ENCODE measurements at regions of chr2 and their contacts with region 1.

Region 1: GRCh38 chr2:189762551-189763298 is at the start of gene OSGEPL1:
- DNase-seq: peak; percentile 93
- H3K4me3 Mint-ChIP-seq: peak within 1 kb of the TSS; percentile 94
- H3K27ac Mint-ChIP-seq: peak within 1 kb of the TSS; percentile 78
- H3K4me1 Mint-ChIP-seq: no peaks in the 10 kb centered on the region
- H3K27me3 Mint-ChIP-seq: no peaks in the 10 kb centered on the region
- CTCF ChIP-seq: peak; percentile 46
- total RNA-seq, gene OSGEPL1: 3.7 and 5.1 TPM in 2 replicates

Region 2: GRCh38 chr2:189674374-189675112 is 88.2 kb before region 1 on chr2 and contains the start of gene ANKAR:
- CTCF ChIA-PET with region 1: interaction called, 3 read pairs
- POLR2A ChIA-PET with region 1: interaction called, 9 read pairs
- intact Hi-C with region 1: loop called (anchors 1 kb)
- DNase-seq: peak; percentile 62
- H3K4me3 Mint-ChIP-seq: peak within 1 kb of the TSS; percentile 86
- H3K27ac Mint-ChIP-seq: peak within 1 kb of the TSS; percentile 95
- H3K4me1 Mint-ChIP-seq: peaks cover 5% of the 10 kb centered on the region
- H3K27me3 Mint-ChIP-seq: no peaks in the 10 kb centered on the region
- CTCF ChIP-seq: peak; percentile 75
- total RNA-seq, gene ANKAR: 4.6 and 5.1 TPM in 2 replicates

Region 3: GRCh38 chr2:189751080-189751658 is 11.6 kb before region 1 on chr2:
- CTCF ChIA-PET with region 1: interaction called, 31 read pairs
- POLR2A ChIA-PET with region 1: interaction called, 13 read pairs
- intact Hi-C with region 1: no loop called
- DNase-seq: peak; percentile 52
- H3K4me3 Mint-ChIP-seq: no peak overlapping the region
- H3K27ac Mint-ChIP-seq: no peak overlapping the region
- H3K4me1 Mint-ChIP-seq: no peaks in the 10 kb centered on the region
- H3K27me3 Mint-ChIP-seq: no peaks in the 10 kb centered on the region
- CTCF ChIP-seq: peak; percentile 61

Region 4: GRCh38 chr2:189783927-189784867 is 21.5 kb after region 1 on chr2 and contains the starts of genes ORMDL1 and PMS1:
- CTCF ChIA-PET with region 1: interaction called, 11 read pairs
- POLR2A ChIA-PET with region 1: interaction called, 86 read pairs
- intact Hi-C with region 1: no loop called
- DNase-seq: peak; percentile 94
- H3K4me3 Mint-ChIP-seq: peak within 1 kb of the TSS; percentile 90
- H3K27ac Mint-ChIP-seq: peak within 1 kb of the TSS; percentile 73
- H3K4me1 Mint-ChIP-seq: peaks cover 41% of the 10 kb centered on the region
- H3K27me3 Mint-ChIP-seq: no peaks in the 10 kb centered on the region
- CTCF ChIP-seq: no peak
- total RNA-seq, gene ORMDL1: 83.0 and 85.1 TPM in 2 replicates
- total RNA-seq, gene PMS1: 38.3 and 50.9 TPM in 2 replicates

Region 5: DNA sequence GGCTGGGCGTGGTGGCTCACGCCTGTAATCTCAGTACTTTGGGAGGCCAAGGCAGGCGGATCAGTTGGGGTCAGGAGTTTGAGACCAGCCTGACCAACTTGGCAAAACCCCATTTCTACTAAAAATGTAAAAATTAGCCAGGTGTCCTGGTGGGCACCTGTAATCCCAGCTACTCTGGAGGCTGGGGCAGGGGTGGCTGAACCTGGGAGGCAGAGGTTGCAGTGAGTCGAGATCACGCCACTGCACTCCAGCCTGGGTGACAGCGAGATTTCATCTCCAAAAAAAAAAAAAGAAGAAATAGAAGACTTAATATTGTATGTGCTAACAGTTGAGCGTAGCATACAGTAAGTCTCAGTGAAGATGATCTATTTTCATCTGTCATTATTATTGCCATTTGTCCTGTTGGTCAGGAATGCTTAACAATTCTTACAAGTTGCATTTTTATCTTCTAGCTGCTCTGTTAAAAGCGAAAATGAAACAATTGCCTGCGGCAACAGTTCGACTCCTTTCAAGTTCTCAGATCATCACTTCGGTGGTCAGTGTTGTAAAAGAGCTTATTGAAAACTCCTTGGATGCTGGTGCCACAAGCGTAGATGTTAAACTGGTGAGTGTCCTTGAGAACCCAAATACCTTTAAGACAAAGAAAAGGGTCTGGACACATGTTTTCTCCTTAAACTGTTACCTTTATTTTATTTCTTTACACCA is 28.8 kb after region 1 on chr2:
- CTCF ChIA-PET with region 1: interaction called, 11 read pairs
- POLR2A ChIA-PET with region 1: interaction called, 11 read pairs
- intact Hi-C with region 1: no loop called
- DNase-seq: peak; percentile 35
- H3K4me3 Mint-ChIP-seq: peak overlapping the region; percentile 60
- H3K27ac Mint-ChIP-seq: peak overlapping the region; percentile 25
- H3K4me1 Mint-ChIP-seq: peaks cover 17% of the 10 kb centered on the region
- H3K27me3 Mint-ChIP-seq: no peaks in the 10 kb centered on the region
- CTCF ChIP-seq: no peak

Region 6: DNA sequence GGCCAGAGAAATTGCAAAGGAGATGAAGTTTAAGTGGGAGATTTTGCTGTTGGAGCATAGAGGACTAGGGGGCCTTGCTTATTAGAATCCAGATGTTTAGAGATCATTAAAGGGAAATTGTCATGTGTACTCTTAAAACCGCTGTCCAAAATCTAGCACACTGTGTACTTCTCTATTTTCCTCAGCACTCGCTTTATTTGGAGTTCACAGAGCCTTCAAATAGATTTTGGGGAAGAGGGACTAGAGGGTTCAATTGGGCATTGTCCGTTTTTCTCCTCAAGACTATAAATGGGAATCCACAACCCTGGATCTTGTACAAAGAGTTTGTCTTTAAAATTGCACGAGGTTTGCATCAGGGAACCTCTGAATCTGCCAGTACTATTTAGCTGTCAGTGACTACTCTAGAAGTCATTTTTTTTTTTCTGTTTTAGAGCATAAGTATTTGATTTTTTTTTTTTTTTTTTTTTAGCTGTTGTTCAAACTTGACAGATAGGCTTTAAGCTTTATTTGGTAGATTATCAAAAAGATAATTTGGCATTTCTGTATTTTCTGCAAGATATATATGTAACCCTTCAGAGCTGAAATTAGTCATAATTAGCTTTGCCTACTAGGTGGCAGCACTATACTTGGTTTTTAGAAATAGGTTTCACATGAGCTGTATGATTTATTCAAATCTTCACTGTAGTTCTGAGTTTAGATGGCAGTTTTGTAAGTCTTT is 35.7 kb after region 1 on chr2:
- CTCF ChIA-PET with region 1: interaction called, 15 read pairs
- POLR2A ChIA-PET with region 1: interaction called, 3 read pairs
- intact Hi-C with region 1: no loop called
- DNase-seq: peak; percentile 40
- H3K4me3 Mint-ChIP-seq: no peak overlapping the region
- H3K27ac Mint-ChIP-seq: peak overlapping the region; percentile 16
- H3K4me1 Mint-ChIP-seq: peaks cover 31% of the 10 kb centered on the region
- H3K27me3 Mint-ChIP-seq: no peaks in the 10 kb centered on the region
- CTCF ChIP-seq: peak; percentile 59

Measured in MCF 10A (cell line).